Caco-2 (cell line): ENCODE measurements at regions of chr3 and their contacts with region 1.

Region 1: GRCh38 chr3:154252759-154253638 is 71.3 kb downstream of the DHX36 start:
- DNase-seq: peak; percentile 83 to 89
- H3K4me3 ChIP-seq: no peak overlapping the region
- H3K4me3 Mint-ChIP-seq: no peak overlapping the region
- H3K27ac Mint-ChIP-seq: peak overlapping the region; percentile 11
- H3K4me1 ChIP-seq: no peaks in the 10 kb centered on the region
- H3K4me1 Mint-ChIP-seq: peaks cover 6% of the 10 kb centered on the region
- H3K27me3 ChIP-seq: no peaks in the 10 kb centered on the region
- H3K27me3 Mint-ChIP-seq: no peaks in the 10 kb centered on the region
- CTCF ChIP-seq: peak; percentile 83 to 91

Region 2: DNA sequence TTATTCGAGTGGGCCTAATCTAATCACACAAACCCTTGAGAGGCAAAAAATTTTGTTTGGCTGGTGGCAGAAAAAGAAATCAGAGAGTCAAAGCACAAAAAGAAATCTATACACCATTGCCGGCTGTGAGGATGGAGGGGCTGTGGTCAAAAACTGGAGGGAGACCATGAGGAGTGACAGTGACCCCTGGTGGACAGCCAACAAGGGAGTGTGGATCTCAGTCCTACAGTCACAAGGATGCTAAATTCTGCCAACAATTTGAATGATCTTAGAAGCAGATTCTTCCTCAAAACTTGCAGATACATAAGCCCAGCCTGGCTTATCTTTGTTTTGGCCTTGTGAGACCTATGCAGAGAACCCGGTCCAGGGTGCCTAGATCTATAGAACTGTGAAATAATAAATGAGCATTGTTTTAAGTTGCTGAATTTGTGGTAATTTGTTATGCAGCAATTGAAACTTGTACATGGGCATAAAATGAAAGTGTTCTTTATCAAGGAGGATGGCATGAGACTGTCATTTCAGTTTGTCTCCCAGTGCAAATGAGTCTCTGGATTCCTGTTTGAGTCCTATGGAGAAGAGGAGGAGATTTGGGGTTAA is 234.8 kb before region 1 on chr3:
- CTCF ChIA-PET with region 1: no interaction called
- POLR2A ChIA-PET with region 1: no interaction called
- intact Hi-C with region 1: loop called (anchors 5 kb)
- DNase-seq: peak; percentile 53 to 66
- H3K4me3 ChIP-seq: no peak overlapping the region
- H3K4me3 Mint-ChIP-seq: no peak overlapping the region
- H3K27ac Mint-ChIP-seq: no peak overlapping the region
- H3K4me1 ChIP-seq: no peaks in the 10 kb centered on the region
- H3K4me1 Mint-ChIP-seq: peaks cover 5% of the 10 kb centered on the region
- H3K27me3 ChIP-seq: no peaks in the 10 kb centered on the region
- H3K27me3 Mint-ChIP-seq: no peaks in the 10 kb centered on the region
- CTCF ChIP-seq: peak; percentile 58 to 71

Region 3: DNA sequence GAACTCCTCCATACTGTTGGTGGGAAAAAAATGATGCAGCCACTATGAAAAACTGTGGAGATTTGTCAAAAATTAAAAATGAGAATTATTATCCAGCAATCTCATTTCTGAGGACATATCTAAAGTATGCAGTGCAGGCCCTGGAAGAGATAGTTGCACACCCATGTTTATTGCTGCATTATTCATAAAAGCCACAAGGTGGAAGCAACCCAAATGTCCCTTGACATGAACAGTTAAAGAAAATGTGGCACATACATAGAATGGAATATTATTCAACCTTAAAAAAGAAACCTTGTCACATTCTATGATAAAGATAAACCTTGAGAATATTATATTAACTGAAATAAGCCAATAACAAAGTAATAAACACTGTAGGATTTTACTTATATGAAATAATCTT is 212.7 kb before region 1 on chr3:
- CTCF ChIA-PET with region 1: no interaction called
- POLR2A ChIA-PET with region 1: no interaction called
- intact Hi-C with region 1: loop called (anchors 1 kb)
- DNase-seq: peak in 1 of 2 experiments; percentile 12
- H3K4me3 ChIP-seq: no peak overlapping the region
- H3K4me3 Mint-ChIP-seq: no peak overlapping the region
- H3K27ac Mint-ChIP-seq: no peak overlapping the region
- H3K4me1 ChIP-seq: no peaks in the 10 kb centered on the region
- H3K4me1 Mint-ChIP-seq: no peaks in the 10 kb centered on the region
- H3K27me3 ChIP-seq: no peaks in the 10 kb centered on the region; the same call in 1 of the 2 replicates
- H3K27me3 Mint-ChIP-seq: peaks cover 15% of the 10 kb centered on the region
- CTCF ChIP-seq: peak; percentile 40 to 41

Region 4: GRCh38 chr3:154095832-154096421 is 157.1 kb before region 1 on chr3:
- CTCF ChIA-PET with region 1: interaction called, 3 read pairs
- POLR2A ChIA-PET with region 1: no interaction called
- intact Hi-C with region 1: loop called (anchors 1 kb)
- DNase-seq: no peak
- H3K4me3 ChIP-seq: no peak overlapping the region
- H3K4me3 Mint-ChIP-seq: no peak overlapping the region
- H3K27ac Mint-ChIP-seq: no peak overlapping the region
- H3K4me1 ChIP-seq: no peaks in the 10 kb centered on the region
- H3K4me1 Mint-ChIP-seq: no peaks in the 10 kb centered on the region
- H3K27me3 ChIP-seq: no peaks in the 10 kb centered on the region
- H3K27me3 Mint-ChIP-seq: no peaks in the 10 kb centered on the region
- CTCF ChIP-seq: peak; percentile 38 to 57

Region 5: DNA sequence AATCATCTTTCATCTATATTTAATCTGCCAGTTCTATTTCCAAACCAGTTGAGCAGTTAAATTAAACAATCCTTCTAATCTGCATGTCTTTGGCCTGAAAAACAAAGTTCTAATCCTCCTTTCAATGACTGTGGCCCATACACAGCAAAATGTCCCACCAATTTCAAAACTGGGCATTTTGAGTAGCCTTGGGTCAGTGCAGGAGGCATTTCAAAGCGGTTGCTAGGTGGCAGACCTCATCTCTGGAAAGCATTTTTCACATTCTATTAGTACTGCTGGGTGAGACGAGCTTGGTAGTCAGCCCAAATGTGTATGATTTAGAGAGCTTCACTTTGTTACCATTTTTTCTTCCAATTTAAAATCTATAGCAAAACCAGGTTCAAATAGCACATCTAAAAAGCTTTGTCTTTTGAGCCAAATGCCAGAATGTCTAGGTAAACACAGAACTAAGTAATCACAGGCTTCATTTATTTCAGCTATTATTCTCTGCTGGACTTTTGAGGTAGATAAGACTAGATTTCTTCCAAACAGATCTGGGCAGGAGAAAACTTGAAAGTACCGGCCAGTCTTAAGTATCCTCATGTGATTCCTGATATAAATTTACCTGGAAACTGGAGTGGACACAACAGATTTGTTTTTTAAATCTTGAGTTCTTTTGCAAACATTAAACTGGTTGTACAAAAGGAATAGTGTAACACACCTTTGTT is 140.7 kb before region 1 on chr3:
- CTCF ChIA-PET with region 1: interaction called, 4 read pairs
- POLR2A ChIA-PET with region 1: no interaction called
- intact Hi-C with region 1: loop called (anchors 1 kb)
- DNase-seq: no peak
- H3K4me3 ChIP-seq: no peak overlapping the region
- H3K4me3 Mint-ChIP-seq: no peak overlapping the region
- H3K27ac Mint-ChIP-seq: no peak overlapping the region
- H3K4me1 ChIP-seq: no peaks in the 10 kb centered on the region
- H3K4me1 Mint-ChIP-seq: no peaks in the 10 kb centered on the region
- H3K27me3 ChIP-seq: no peaks in the 10 kb centered on the region
- H3K27me3 Mint-ChIP-seq: no peaks in the 10 kb centered on the region
- CTCF ChIP-seq: peak in 1 of 2 experiments; percentile 13

Region 6: DNA sequence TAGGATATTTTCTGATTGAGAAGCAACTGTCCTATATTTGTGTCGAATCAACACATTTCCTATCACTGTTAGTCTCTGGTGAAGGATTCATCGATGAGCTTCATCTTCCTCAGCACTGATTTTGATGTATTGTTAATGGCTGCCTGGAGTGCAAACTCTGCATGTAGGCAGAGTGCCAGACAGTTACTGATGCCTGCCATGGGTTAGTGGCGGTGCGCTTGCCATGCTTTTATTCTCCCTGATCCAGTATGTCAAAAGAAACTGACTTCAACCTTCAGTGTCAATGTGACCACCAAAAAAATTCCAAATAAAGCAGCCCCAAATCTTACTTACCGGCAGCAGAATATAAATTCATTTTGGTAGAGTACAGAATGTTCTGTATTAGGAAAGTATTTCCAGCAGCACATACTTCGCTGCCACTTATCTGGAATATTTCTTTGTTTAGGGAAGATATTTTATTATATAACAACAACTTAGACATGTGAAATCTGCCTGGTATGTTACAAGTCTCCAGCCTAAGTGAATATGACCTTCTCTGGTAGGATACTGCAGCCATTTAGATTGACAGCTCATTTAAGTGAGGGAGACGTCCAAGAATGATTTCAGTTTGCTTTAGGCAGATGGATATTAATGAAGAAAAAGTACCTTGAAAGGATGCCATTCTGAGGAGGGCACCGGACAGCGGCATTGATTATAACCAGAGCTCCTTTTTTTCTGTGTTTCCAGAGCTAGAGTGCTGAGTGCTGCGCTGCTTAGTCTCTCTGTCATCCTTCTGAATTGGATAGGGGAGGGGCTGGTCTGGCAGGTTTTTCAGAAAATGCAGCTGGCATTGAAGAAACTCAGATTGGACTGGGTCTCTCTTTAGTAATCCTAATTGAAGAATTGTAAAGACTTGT is 71.9 kb before region 1 on chr3:
- CTCF ChIA-PET with region 1: no interaction called
- POLR2A ChIA-PET with region 1: no interaction called
- intact Hi-C with region 1: no loop called
- DNase-seq: peak in 1 of 2 experiments; percentile 17
- H3K4me3 ChIP-seq: no peak overlapping the region
- H3K4me3 Mint-ChIP-seq: no peak overlapping the region
- H3K27ac Mint-ChIP-seq: no peak overlapping the region
- H3K4me1 ChIP-seq: no peaks in the 10 kb centered on the region
- H3K4me1 Mint-ChIP-seq: no peaks in the 10 kb centered on the region
- H3K27me3 ChIP-seq: no peaks in the 10 kb centered on the region
- H3K27me3 Mint-ChIP-seq: no peaks in the 10 kb centered on the region
- CTCF ChIP-seq: no peak

Region 7: DNA sequence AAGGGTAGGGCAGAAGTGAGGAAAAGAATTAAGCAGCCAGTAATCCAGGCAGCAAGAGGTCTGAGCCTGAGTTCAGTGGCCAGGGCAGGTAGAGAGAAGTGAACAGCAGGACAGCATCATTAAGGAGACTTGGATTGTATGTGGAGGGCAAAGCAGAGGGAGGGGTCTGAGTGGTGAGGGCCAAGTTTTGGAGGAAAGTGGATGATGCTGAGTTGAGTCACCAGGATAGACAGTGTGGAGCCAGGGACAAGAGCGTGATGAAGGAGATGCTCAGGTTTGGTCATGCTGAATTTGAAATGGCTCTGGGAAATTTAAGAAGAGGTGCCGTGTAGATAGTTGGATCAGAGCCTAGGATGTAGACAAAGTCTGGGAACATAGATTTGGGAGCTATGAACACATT is 38.7 kb before region 1 on chr3:
- CTCF ChIA-PET with region 1: no interaction called
- POLR2A ChIA-PET with region 1: no interaction called
- intact Hi-C with region 1: no loop called
- DNase-seq: no peak
- H3K4me3 ChIP-seq: no peak overlapping the region
- H3K4me3 Mint-ChIP-seq: no peak overlapping the region
- H3K27ac Mint-ChIP-seq: no peak overlapping the region
- H3K4me1 ChIP-seq: no peaks in the 10 kb centered on the region
- H3K4me1 Mint-ChIP-seq: no peaks in the 10 kb centered on the region
- H3K27me3 ChIP-seq: no peaks in the 10 kb centered on the region
- H3K27me3 Mint-ChIP-seq: no peaks in the 10 kb centered on the region
- CTCF ChIP-seq: no peak